Gastrocnemius medialis (tissue), 4 donors: ENCODE measurements at regions of chrX and their contacts with region 1.

Region 1: DNA sequence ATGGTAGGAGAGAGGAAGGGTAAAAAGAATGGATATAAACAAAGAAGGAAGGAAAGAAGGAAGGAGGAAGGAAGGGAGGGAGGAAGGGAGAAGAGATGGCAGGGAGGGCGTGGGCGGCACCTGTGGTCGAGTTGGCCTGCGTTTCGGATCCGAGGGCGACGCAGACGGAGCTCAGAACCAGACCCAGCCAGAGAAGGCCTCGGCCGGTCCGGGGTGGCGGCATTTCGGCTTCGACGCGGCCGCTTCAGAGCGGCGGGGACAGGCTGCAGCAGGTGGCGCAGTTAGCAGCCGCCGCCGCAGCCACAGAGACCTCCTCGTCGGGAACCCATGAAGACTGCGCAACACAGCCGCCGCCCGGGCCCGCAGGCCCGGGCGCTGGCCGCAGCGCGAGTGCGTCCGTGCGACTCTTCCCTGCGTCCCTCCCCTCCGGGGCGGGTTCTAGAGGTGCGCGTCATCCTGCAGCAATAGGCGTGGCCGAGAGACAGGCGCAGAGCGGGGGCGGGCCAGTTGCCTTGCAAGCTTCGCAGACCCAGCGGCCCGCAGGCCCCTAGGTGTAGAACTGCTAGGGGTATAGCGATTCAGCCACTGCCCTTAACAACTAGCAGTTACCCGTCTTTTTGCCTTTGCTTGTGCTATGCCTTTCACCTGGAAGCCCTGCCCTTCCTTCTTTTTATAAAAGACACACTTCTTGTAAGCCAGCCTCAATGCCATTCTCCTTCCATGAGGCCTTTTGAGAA is at the start of gene IDS:
- DNase-seq: peak; percentile 77 to 84
- ATAC-seq: peak; percentile 94 to 98
- H3K4me3 ChIP-seq: peak within 1 kb of the TSS; percentile 63 to 79 (median 72)
- H3K27ac ChIP-seq: peak within 1 kb of the TSS; percentile 86 to 89 (median 86)
- H3K4me1 ChIP-seq: peaks cover 2 to 8% of the 10 kb centered on the region in 2 donors
- H3K27me3 ChIP-seq: no peaks in the 10 kb centered on the region
- CTCF ChIP-seq: peak in 1 of 5 experiments; percentile 10
- POLR2A ChIP-seq: peak; percentile 90 to 93
- total RNA-seq, gene IDS: 28.4 to 44.2 (median 33.7) TPM

Region 2: DNA sequence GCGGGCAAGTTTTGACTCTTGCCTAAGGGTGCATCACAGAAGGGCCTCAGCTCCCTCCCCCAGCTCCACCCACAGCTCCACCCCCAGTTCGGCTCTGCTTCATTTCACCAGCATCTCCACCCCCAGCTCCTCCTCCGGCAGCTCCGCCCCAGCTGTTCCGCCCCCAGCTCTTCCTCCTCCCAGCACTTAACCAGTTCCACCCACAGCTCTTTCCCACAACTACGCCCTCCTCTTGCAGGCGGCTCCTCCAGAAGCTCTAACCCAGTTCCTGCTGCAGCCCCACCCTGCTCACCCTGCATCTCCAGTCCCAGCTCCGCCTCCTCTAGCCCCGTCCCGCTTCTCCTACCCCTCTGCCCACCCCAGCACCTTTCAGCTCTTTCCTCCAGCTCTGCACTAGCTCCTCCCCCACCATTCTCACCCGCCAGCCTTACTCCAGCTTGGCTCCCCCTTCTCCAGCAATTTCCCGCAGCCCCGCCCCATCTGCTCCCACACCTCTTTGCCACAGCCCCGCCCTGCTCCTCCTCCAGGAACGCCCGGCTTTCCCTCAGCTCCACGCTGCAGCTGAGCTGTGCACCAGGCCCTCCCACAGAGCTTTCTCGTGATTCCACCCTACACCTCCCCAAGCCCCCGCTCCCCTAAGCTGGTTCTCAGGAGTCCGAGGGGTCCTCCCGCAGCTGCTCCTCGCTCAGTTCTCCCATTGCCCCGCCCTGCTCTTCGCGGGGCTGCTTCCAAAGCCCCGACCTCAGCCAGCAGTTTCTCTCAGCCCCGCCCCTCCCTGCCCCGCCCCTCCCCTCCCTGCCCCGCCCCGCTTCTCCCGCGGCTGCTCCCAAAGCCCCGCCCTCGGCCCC is 34.4 kb after region 1 on chrX:
- in situ Hi-C with region 1: no loop called
- intact Hi-C with region 1: loop called (anchors 1 kb)
- DNase-seq: peak; percentile 73 to 81
- ATAC-seq: peak; percentile 58 to 66
- H3K4me3 ChIP-seq: peak overlapping the region; percentile 55 to 76 (median 58)
- H3K27ac ChIP-seq: peak overlapping the region; percentile 75 to 97 (median 88)
- H3K4me1 ChIP-seq: peaks cover 0 to 6% of the 10 kb centered on the region in 2 donors
- H3K27me3 ChIP-seq: no peaks in the 10 kb centered on the region
- CTCF ChIP-seq: no peak
- POLR2A ChIP-seq: no peak

Region 3: DNA sequence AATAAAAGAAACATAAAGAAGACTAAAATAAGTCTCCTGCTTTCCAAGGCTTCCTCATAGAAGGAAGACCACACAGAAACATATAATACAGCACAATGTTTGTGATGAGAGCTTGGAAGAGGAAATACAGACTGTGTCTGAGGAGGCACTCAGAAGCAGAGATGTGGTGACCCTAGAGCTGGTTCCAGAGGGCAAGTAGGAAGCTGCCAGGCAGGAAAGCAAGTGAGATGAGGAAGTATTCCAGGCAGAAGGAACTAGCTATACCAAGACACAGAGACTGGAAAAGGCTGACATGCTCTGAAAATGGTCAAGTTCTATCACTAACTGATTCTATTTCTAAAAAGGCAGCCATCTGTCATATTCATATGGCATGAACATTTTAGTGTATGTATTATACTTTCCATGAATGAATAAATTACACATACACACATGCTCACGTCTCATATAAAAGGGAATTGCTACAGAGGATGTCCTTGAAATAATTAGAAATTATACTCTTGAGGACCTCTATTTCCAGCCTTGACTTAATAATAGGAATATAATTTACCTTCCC is 106.6 kb after region 1 on chrX:
- in situ Hi-C with region 1: loop called in 2 of 4 experiments (anchors 25 kb)
- intact Hi-C with region 1: no loop called
- DNase-seq: no peak
- ATAC-seq: no peak
- H3K4me3 ChIP-seq: no peak overlapping the region
- H3K27ac ChIP-seq: no peak overlapping the region
- H3K4me1 ChIP-seq: no peaks in the 10 kb centered on the region
- H3K27me3 ChIP-seq: no peaks in the 10 kb centered on the region
- CTCF ChIP-seq: no peak
- POLR2A ChIP-seq: no peak

Region 4: DNA sequence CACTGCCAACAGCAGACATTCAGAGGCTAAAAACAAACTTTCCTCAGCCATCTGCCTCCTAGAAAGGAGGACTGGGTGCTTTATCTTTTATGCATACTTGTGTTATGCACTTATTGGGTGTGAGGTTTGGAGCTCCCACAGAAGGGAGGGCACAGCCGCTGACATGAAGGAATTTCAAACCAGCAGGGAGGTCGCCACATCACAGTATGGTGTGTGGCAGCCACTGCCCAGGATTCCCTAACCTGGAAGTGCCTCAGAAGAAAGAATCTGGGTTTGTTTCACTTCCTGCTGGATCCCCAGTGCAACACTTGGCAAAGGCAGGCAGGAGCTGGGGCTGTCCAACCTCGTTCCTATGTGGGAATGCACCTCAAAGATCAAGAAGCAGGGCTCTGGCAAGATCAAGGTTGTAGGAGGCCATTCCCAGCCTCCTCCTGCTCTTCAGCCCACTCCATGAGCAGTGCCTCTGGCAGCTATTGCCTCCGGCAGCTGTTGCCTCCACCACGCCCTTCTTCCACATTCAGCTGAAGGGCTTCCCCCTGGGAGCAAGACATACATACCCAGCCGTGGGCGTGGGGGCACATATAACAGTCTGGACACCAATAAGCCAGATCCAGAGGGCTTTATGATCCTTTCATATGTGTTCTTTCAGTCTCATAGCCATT is 749.0 kb after region 1 on chrX:
- in situ Hi-C with region 1: no loop called
- intact Hi-C with region 1: no loop called
- DNase-seq: no peak
- ATAC-seq: no peak
- H3K4me3 ChIP-seq: no peak overlapping the region
- H3K27ac ChIP-seq: no peak overlapping the region
- H3K4me1 ChIP-seq: no peaks in the 10 kb centered on the region
- H3K27me3 ChIP-seq: no peaks in the 10 kb centered on the region
- CTCF ChIP-seq: no peak
- POLR2A ChIP-seq: no peak

Region 5: DNA sequence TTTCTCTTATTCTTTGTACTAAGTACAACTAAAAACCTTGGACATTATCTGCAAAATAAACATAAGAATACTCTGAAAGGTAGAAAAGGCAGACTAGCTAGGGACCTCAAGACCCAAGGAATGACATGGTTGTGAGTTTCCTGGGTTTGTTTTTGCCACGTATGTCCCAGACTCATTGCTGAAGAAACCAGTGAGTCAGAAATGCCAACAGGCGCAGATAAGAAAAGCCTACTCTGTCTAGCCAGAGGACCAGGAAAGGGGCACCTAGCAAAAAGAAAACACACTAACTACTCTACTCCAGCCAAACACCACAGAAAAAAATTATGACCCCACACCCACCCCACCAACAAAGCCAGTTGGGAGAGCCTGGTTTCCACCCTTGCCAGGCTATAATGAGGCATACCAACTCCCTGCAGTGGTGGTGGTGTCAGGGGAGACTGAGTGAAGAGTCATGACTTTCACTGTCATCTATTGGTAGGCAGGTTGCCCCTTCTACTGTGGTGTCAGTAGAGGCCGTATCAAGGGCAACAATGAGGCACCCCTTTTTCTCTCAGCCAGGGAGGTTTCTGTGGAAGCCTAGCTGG is 1199.0 kb after region 1 on chrX:
- in situ Hi-C with region 1: loop called in 1 of 4 experiments (anchors 25 kb)
- intact Hi-C with region 1: no loop called
- DNase-seq: no peak
- ATAC-seq: no peak
- H3K4me3 ChIP-seq: no peak overlapping the region
- H3K27ac ChIP-seq: no peak overlapping the region
- H3K4me1 ChIP-seq: peaks cover 0 to 11% of the 10 kb centered on the region in 2 donors
- H3K27me3 ChIP-seq: no peaks in the 10 kb centered on the region
- CTCF ChIP-seq: no peak
- POLR2A ChIP-seq: no peak